Breast epithelium (tissue), 4 donors: ENCODE measurements at regions of chr5 and their contacts with region 1.

Region 1: GRCh38 chr5:175478384-175479124 is at the start of gene SFXN1:
- DNase-seq: peak in 1 of 2 donors; percentile 27
- H3K4me3 ChIP-seq: peak within 1 kb of the TSS; percentile 90 to 99 (median 95)
- H3K27ac ChIP-seq: peak within 1 kb of the TSS; percentile 73 to 87
- H3K4me1 ChIP-seq: peaks cover 7 to 8% of the 10 kb centered on the region in 2 donors
- H3K27me3 ChIP-seq: no peaks in the 10 kb centered on the region
- CTCF ChIP-seq: no peak
- POLR2A ChIP-seq: no peak
- total RNA-seq, gene SFXN1: 16.6 to 30.5 (median 20.9) TPM

Region 2: DNA sequence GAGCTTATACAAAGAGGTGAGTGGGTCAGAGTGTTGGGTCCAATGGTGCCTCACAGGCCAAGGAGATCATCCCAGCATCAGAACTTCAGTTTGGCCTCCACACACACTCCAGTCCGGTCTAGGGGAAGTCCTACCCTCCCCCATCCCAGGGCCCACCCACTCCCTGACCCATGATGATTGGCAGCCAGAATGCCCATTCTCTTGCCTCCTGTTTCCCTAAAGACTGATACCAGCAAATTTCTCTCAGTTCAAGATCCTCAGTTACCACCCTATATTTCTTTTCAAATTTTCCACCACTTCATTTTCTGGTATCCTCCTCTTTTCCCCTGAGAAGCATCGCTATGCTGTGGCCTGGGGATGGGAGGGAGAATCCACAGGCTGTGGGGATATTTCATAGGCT is 56.5 kb before region 1 on chr5:
- intact Hi-C with region 1: no loop called
- DNase-seq: no peak
- H3K4me3 ChIP-seq: no peak overlapping the region
- H3K27ac ChIP-seq: no peak overlapping the region
- H3K4me1 ChIP-seq: no peaks in the 10 kb centered on the region
- H3K27me3 ChIP-seq: no peaks in the 10 kb centered on the region
- CTCF ChIP-seq: no peak
- POLR2A ChIP-seq: no peak

Region 3: DNA sequence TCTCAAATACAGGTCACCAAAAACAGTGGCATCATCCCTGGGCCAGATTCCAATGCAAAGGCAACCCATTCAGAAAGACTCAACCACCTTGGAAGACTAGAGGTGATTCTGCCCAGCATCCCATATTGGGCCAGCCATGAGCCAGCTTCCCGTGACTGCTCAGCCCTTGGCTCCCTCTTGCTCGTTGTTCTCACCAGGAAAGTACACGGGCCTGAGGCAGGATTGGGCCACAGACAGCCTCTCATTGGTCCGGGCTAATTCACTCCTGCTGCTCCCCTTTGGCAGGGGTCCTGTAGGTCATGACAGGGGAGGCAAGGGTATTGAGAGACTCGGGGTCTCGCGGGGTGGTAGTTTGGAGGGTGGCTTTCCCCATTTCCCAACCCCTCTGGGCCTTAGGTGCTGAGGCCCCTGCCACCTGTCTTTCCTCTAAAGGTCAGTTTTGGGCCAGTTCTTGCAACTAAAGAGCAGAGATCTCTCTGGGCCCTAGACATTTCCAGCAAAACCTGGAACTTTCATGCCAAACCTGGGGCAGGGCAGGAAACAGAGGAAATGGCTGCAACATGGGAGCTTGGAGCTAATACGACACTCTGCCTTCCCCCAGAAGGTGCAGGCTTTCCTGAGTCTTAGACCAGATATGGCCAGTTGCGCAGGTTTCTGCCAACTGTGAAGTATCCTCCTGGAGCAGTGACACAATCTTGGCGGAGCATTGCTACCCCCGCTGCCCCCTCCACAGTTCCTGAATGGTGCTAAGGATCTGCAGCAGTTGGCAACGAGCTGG is 1586.1 kb after region 1 on chr5:
- intact Hi-C with region 1: loop called (anchors 5 kb)
- DNase-seq: no peak
- H3K4me3 ChIP-seq: no peak overlapping the region
- H3K27ac ChIP-seq: no peak overlapping the region
- H3K4me1 ChIP-seq: no peaks in the 10 kb centered on the region
- H3K27me3 ChIP-seq: no peaks in the 10 kb centered on the region
- CTCF ChIP-seq: no peak
- POLR2A ChIP-seq: no peak